ENCODE measurements at regions of chr4 and their contacts with region 1.

Region 1: DNA sequence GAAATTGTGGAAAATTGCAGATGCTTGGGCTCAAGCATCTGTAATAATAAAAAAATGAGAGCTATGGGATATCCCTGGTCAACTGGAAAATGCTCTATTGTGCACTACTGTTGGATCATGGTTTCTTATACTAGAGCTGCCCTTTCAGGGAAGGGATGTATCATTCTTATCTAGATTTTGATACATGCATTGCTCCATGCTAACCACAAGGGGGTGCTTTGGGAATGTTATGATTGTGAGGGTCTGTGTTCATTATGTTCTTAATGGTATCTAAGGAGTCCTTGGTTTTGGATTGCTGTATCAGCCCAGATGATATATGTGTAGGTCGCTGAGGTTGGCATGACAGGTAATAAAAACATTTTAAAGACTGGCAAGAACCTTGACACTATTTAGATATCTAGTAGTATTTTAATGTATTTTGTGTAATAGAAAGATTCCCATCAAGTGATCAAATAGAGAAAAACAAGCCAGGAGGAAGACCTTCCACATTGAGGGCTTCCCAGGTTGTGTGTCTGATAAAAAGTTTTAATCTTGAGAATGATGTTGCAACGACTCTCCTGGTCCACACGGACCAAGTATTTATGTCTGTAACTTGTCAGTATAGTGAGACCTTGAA is 49.2 kb upstream of the TLR2 start:
- DNase-seq: no peak
- H3K4me3 Mint-ChIP-seq: no peak overlapping the region
- H3K27ac Mint-ChIP-seq: no peak overlapping the region
- H3K4me1 Mint-ChIP-seq: no peaks in the 10 kb centered on the region
- H3K27me3 Mint-ChIP-seq: no peaks in the 10 kb centered on the region

Region 2: GRCh38 chr4:153555730-153556433 is 79.0 kb before region 1 on chr4:
- intact Hi-C with region 1: no loop called
- DNase-seq: no peak
- H3K4me3 Mint-ChIP-seq: no peak overlapping the region
- H3K27ac Mint-ChIP-seq: no peak overlapping the region
- H3K4me1 Mint-ChIP-seq: peaks cover 9% of the 10 kb centered on the region
- H3K27me3 Mint-ChIP-seq: no peaks in the 10 kb centered on the region

Region 3: GRCh38 chr4:153750197-153750817 is 115.5 kb after region 1 on chr4:
- intact Hi-C with region 1: loop called (anchors 1 kb)
- DNase-seq: peak; percentile 52
- H3K4me3 Mint-ChIP-seq: no peak overlapping the region
- H3K27ac Mint-ChIP-seq: no peak overlapping the region
- H3K4me1 Mint-ChIP-seq: no peaks in the 10 kb centered on the region
- H3K27me3 Mint-ChIP-seq: peaks cover 31% of the 10 kb centered on the region